Calu3 (cell line): ENCODE measurements at regions of chr6 and their contacts with region 1.

Region 1: GRCh38 chr6:71404145-71404966 is 115.7 kb downstream of the OGFRL1 start:
- DNase-seq: peak; percentile 51
- H3K4me3 Mint-ChIP-seq: peak overlapping the region; percentile 76
- H3K27ac Mint-ChIP-seq: peak overlapping the region; percentile 87
- H3K4me1 Mint-ChIP-seq: peaks cover 41% of the 10 kb centered on the region
- H3K27me3 Mint-ChIP-seq: no peaks in the 10 kb centered on the region
- CTCF ChIP-seq: no peak

Region 2: GRCh38 chr6:71228461-71229041 is 175.8 kb before region 1 on chr6:
- CTCF ChIA-PET with region 1: no interaction called
- intact Hi-C with region 1: no loop called
- DNase-seq: no peak
- H3K4me3 Mint-ChIP-seq: no peak overlapping the region
- H3K27ac Mint-ChIP-seq: no peak overlapping the region
- H3K4me1 Mint-ChIP-seq: peaks cover 23% of the 10 kb centered on the region
- H3K27me3 Mint-ChIP-seq: no peaks in the 10 kb centered on the region
- CTCF ChIP-seq: no peak

Region 3: GRCh38 chr6:71383901-71384489 is 20.4 kb before region 1 on chr6:
- CTCF ChIA-PET with region 1: interaction called, 5 read pairs
- intact Hi-C with region 1: loop called (anchors 2 kb)
- DNase-seq: peak; percentile 56
- H3K4me3 Mint-ChIP-seq: no peak overlapping the region
- H3K27ac Mint-ChIP-seq: peak overlapping the region; percentile 75
- H3K4me1 Mint-ChIP-seq: peaks cover 49% of the 10 kb centered on the region
- H3K27me3 Mint-ChIP-seq: no peaks in the 10 kb centered on the region
- CTCF ChIP-seq: peak; percentile 74

Region 4: GRCh38 chr6:71420693-71421328 is 16.5 kb after region 1 on chr6:
- CTCF ChIA-PET with region 1: interaction called, 7 read pairs
- intact Hi-C with region 1: loop called (anchors 1 kb)
- DNase-seq: peak; percentile 98
- H3K4me3 Mint-ChIP-seq: peak overlapping the region; percentile 81
- H3K27ac Mint-ChIP-seq: peak overlapping the region; percentile 85
- H3K4me1 Mint-ChIP-seq: peaks cover 14% of the 10 kb centered on the region
- H3K27me3 Mint-ChIP-seq: no peaks in the 10 kb centered on the region
- CTCF ChIP-seq: no peak

Region 5: GRCh38 chr6:71444222-71444621 is 39.9 kb after region 1 on chr6:
- CTCF ChIA-PET with region 1: interaction called, 13 read pairs
- intact Hi-C with region 1: no loop called
- DNase-seq: no peak
- H3K4me3 Mint-ChIP-seq: peak overlapping the region; percentile 18
- H3K27ac Mint-ChIP-seq: no peak overlapping the region
- H3K4me1 Mint-ChIP-seq: no peaks in the 10 kb centered on the region
- H3K27me3 Mint-ChIP-seq: no peaks in the 10 kb centered on the region
- CTCF ChIP-seq: peak; percentile 18

Region 6: DNA sequence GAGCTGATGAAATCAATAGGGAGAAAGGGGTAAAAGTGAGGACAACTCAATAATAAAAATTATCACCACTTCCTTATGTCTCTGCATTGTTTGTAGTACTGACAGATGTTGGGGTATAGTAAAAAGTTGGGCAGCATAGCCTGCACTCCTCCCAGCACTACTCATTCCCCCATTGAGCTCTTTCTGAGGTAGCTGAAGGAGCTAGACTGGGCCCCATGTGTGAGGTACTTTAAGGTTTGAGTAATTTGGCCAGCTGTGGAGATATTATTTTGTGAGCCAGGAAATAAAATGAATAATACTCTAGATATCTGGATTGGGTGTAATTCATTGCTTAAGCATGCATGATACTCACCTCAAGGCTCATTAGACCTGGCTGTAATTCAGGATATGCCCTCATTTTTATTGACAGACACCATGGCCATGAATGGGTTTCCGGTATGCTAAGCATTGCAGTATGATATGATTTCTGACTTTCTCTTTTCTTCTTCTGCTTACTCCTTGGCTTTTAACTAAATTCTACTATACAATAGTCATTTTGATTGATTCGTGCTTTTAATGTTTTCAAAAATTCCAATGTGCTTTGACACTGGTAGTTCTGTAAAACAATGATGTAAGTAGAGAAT is 198.1 kb after region 1 on chr6:
- CTCF ChIA-PET with region 1: no interaction called
- intact Hi-C with region 1: loop called (anchors 10 kb)
- DNase-seq: peak; percentile 71
- H3K4me3 Mint-ChIP-seq: no peak overlapping the region
- H3K27ac Mint-ChIP-seq: peak overlapping the region; percentile 78
- H3K4me1 Mint-ChIP-seq: peaks cover 88% of the 10 kb centered on the region
- H3K27me3 Mint-ChIP-seq: no peaks in the 10 kb centered on the region
- CTCF ChIP-seq: no peak